Stomach (tissue), 19 donors: ENCODE measurements at regions of chr6 and their contacts with region 1.

Region 1: DNA sequence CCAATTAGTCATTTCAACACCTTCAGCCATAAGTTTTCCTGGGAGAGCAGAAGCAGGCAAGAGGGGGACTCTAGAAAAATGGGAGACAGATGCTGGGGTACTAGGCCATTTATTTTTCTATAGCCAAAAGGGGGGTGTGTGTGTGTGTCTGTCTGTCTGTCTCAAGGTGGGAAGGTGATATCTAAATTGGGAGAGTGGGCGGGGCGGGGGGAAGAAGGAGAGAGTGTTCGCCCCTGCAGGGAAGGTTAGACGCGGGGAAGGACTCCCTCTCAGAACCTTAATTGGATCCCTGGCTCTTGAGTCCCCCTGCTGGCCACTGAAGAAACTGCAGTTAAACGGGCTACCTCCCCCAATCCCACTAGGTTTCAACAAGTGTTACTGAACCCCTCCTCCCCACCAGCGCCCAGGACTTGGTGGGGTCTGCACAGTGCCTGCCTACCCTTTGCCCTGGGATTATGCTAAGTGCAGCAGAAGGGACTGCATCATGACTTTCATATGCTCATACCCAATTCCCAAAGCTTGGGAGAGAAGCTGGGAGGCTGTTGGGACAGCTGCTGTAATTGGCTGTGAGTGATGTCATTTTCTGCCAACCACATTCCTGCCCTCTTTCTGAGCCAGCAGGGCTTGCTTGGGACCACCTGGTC is 45.8 kb downstream of the FOXP4 start:
- DNase-seq: peak; percentile 83 to 89
- H3K4me3 ChIP-seq: no peak overlapping the region
- H3K27ac ChIP-seq: no peak overlapping the region
- H3K4me1 ChIP-seq: peaks cover 0 to 6% (median 2%) of the 10 kb centered on the region in 4 donors
- H3K27me3 ChIP-seq: no peaks in the 10 kb centered on the region
- CTCF ChIP-seq: peak in 5 of 7 experiments; percentile 90 to 96 (median 94)
- EP300 ChIP-seq: no peak
- POLR2A ChIP-seq: no peak

Region 2: DNA sequence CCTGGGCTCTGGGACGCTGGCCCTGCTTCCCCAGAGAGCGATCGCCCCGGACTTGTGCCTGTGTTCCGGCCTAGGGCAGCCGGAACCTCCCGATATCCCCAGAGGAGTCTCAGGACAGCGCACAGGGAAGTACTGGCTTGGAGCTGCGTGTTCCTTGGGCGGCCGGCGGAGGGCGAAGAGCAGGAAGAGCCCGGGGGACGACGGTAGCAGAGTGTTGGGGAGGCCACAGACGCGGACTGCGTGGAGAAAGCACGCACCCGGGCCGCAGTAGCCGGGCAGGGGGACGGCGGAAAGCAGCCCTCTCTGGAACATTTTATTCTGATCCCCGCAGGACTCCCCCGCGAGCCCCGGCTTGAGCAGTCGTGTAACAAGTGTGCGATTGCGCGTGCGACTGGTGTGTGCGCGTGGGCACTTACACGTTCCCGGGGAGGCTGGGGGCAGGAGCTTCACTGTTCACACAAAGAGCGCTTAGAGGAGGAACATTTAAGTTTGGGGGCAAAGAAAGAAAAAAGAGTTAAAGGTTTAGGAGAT is 220.5 kb before region 1 on chr6:
- intact Hi-C with region 1: loop called (anchors 5 kb)
- DNase-seq: peak; percentile 70 to 84
- H3K4me3 ChIP-seq: peak overlapping the region; percentile 36 to 54 (median 42)
- H3K27ac ChIP-seq: peak overlapping the region; percentile 44 to 77 (median 64)
- H3K4me1 ChIP-seq: peaks cover 47 to 65% (median 57%) of the 10 kb centered on the region in 4 donors
- H3K27me3 ChIP-seq: peaks cover 16 to 92% (median 57%) of the 10 kb centered on the region in 3 donors
- CTCF ChIP-seq: peak in 5 of 7 experiments; percentile 21 to 42 (median 37)
- EP300 ChIP-seq: no peak
- POLR2A ChIP-seq: no peak

Region 3: DNA sequence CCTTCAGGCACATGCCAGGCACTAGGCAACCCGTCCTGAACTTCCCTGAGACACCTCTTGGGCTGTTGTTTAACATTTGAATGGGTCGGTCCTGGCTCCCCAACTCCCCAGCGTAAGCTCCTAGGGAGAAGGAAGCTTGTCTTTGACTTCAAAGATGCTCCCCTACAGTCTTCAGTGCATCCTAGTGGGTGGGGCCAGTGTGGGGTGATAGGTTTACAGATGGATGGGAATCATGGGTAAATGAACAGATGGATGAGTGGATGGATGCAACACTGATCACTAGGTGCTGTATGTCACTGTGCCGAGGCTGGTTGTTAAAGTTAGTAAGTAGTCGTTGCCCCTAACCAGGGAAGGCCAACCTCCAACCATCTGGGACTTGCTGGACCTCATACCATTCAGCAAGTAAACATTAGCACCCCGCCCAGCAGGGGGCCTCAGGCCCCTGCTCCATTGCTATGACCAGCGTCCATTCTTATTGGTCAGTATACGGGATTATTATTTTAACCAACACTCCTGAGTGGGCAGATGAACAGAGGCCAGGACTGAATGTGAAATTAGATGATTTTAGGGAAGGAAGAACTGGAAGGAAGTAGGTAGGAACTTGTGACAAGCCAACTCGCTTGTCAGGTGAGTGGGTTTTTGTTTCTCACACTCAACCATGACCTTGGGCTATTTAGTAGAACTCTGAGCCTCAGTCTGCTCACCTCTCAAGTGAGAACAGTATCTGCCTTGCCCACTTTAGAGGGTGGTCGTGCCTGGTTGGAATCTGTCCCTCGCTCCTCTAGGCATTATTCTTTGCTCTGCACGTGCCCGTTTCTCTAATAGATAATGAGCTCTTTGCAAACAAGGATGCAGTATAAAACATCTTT is 128.7 kb before region 1 on chr6:
- intact Hi-C with region 1: loop called (anchors 5 kb)
- DNase-seq: peak; percentile 85 to 86
- H3K4me3 ChIP-seq: no peak overlapping the region
- H3K27ac ChIP-seq: no peak overlapping the region
- H3K4me1 ChIP-seq: peaks cover 0 to 23% (median 7%) of the 10 kb centered on the region in 4 donors
- H3K27me3 ChIP-seq: peaks cover 0 to 38% (median 0%) of the 10 kb centered on the region in 3 donors
- CTCF ChIP-seq: peak in 5 of 7 experiments; percentile 21 to 80 (median 57)
- EP300 ChIP-seq: no peak
- POLR2A ChIP-seq: no peak